AG04450 (cell line): ENCODE measurements at regions of chr17 and their contacts with region 1.

Region 1: GRCh38 chr17:71830866-71831265 is 290.0 kb upstream of the SOX9 start:
- DNase-seq: no peak
- H3K4me3 ChIP-seq: no peak overlapping the region
- H3K27ac ChIP-seq: no peak overlapping the region
- H3K27me3 ChIP-seq: peaks cover 6% of the 10 kb centered on the region
- CTCF ChIP-seq: no peak

Region 2: GRCh38 chr17:72008236-72008876 is 177.5 kb after region 1 on chr17:
- CTCF ChIA-PET with region 1: no interaction called
- POLR2A ChIA-PET with region 1: interaction called, 11 read pairs
- DNase-seq: no peak
- H3K4me3 ChIP-seq: no peak overlapping the region
- H3K27ac ChIP-seq: no peak overlapping the region
- H3K27me3 ChIP-seq: no peaks in the 10 kb centered on the region
- CTCF ChIP-seq: no peak